ENCODE measurements at regions of chr11 and their contacts with region 1.

Region 1: GRCh38 chr11:6531267-6531752 is 34.2 kb downstream of the DNHD1 start:
- DNase-seq: peak; percentile 46 to 54 (median 50)
- H3K4me3 ChIP-seq: no peak overlapping the region
- H3K4me3 Mint-ChIP-seq: no peak overlapping the region
- H3K27ac ChIP-seq: no peak overlapping the region
- H3K27ac Mint-ChIP-seq: no peak overlapping the region
- H3K4me1 ChIP-seq: peaks cover 7% of the 10 kb centered on the region
- H3K4me1 Mint-ChIP-seq: peaks cover 6 to 14% (median 8%) of the 10 kb centered on the region in 4 donors
- H3K27me3 ChIP-seq: no peaks in the 10 kb centered on the region
- H3K27me3 Mint-ChIP-seq: no peaks in the 10 kb centered on the region

Region 2: GRCh38 chr11:6541356-6541755 is 10.0 kb after region 1 on chr11:
- CTCF ChIA-PET with region 1: interaction called, 20 read pairs
- POLR2A ChIA-PET with region 1: no interaction called
- intact Hi-C with region 1: no loop called
- DNase-seq: no peak
- H3K4me3 ChIP-seq: no peak overlapping the region
- H3K4me3 Mint-ChIP-seq: no peak overlapping the region
- H3K27ac ChIP-seq: no peak overlapping the region
- H3K27ac Mint-ChIP-seq: peak overlapping the region in 4 of 7 donors; percentile 6 to 60 (median 38)
- H3K4me1 ChIP-seq: peaks cover 13% of the 10 kb centered on the region
- H3K4me1 Mint-ChIP-seq: peaks cover 9 to 10% (median 9%) of the 10 kb centered on the region in 4 donors
- H3K27me3 ChIP-seq: no peaks in the 10 kb centered on the region
- H3K27me3 Mint-ChIP-seq: no peaks in the 10 kb centered on the region

Region 3: GRCh38 chr11:6637871-6638270 is 106.6 kb after region 1 on chr11:
- CTCF ChIA-PET with region 1: interaction called, 10 read pairs
- POLR2A ChIA-PET with region 1: no interaction called
- intact Hi-C with region 1: no loop called
- DNase-seq: no peak
- H3K4me3 ChIP-seq: no peak overlapping the region
- H3K4me3 Mint-ChIP-seq: no peak overlapping the region
- H3K27ac ChIP-seq: no peak overlapping the region
- H3K27ac Mint-ChIP-seq: no peak overlapping the region
- H3K4me1 ChIP-seq: no peaks in the 10 kb centered on the region
- H3K4me1 Mint-ChIP-seq: peaks cover 0 to 6% (median 0%) of the 10 kb centered on the region in 4 donors
- H3K27me3 ChIP-seq: no peaks in the 10 kb centered on the region
- H3K27me3 Mint-ChIP-seq: peaks cover 0 to 2% of the 10 kb centered on the region in 2 donors

Region 4: DNA sequence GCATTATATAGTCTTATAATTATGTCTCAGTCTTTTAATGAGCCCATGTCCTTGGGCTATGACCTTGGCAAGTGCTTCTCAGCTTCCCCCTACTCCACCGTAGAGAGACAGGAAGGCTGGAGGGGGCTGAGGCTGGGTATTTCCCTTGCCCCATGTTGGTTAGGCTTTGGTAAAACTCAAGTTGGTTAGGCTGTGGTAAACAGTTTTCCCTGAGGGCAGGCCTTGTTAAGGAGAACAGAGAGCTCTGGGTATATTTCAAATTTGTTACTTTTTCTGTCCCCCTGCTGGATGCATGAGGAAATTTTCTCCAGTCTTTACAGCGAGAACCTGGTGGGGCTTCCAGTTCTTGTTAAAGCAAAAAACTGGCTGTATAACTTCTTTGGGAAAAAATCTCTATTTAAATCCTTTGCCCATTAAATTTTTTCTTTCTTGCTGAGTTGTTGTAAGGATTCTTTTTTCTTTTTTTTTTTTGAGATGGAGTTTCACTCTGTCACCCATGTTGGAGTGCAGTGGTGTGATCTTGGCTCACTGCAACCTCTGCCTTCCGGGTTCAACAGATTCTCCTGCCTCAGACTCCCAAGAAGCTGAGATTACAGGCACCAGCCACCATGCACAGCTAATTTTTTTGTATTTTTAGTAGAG is 136.5 kb after region 1 on chr11:
- CTCF ChIA-PET with region 1: interaction called, 9 read pairs
- POLR2A ChIA-PET with region 1: interaction called, 4 read pairs
- intact Hi-C with region 1: loop called (anchors 1 kb)
- DNase-seq: peak; percentile 48 to 78 (median 54)
- H3K4me3 ChIP-seq: no peak overlapping the region
- H3K4me3 Mint-ChIP-seq: peak overlapping the region in 7 of 8 donors; percentile 5 to 35 (median 16)
- H3K27ac ChIP-seq: no peak overlapping the region
- H3K27ac Mint-ChIP-seq: peak overlapping the region; percentile 11 to 88 (median 74)
- H3K4me1 ChIP-seq: peaks cover 59% of the 10 kb centered on the region
- H3K4me1 Mint-ChIP-seq: peaks cover 45 to 87% (median 54%) of the 10 kb centered on the region in 4 donors
- H3K27me3 ChIP-seq: no peaks in the 10 kb centered on the region
- H3K27me3 Mint-ChIP-seq: no peaks in the 10 kb centered on the region

Region 5: DNA sequence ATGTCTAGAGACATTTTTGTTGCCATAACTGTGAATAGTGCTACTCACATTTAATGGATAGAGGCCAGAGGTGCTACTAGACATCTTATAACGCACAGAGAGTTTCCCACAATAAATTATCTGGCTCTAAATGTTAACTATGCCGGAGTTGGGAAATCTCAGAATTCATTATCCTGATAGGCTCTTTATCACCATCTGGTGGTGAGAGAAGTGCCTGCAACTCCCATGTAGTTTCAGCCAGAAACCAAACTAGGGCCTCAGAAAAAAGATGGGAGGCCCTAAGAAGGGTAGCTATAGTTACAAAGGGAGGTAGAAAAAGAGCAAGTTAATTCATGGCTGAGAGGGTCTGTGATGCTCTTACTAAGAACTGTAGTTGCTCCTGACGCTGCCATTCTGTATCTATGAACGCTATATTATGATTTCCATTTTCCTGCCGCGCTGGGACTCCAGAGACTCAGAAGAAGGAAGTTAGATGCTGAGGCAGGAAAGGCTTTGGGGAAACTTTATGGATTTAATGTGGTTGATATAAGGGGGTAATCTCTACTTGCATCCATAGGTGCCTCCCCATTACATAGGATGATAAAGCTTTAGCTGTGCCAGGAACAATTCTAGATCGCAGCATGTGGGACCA is 174.7 kb after region 1 on chr11:
- CTCF ChIA-PET with region 1: interaction called, 82 read pairs
- POLR2A ChIA-PET with region 1: no interaction called
- intact Hi-C with region 1: loop called (anchors 1 kb)
- DNase-seq: peak; percentile 38 to 52 (median 46)
- H3K4me3 ChIP-seq: no peak overlapping the region
- H3K4me3 Mint-ChIP-seq: no peak overlapping the region
- H3K27ac ChIP-seq: no peak overlapping the region
- H3K27ac Mint-ChIP-seq: peak overlapping the region; percentile 4 to 84 (median 43)
- H3K4me1 ChIP-seq: no peaks in the 10 kb centered on the region
- H3K4me1 Mint-ChIP-seq: peaks cover 9 to 25% (median 18%) of the 10 kb centered on the region in 4 donors
- H3K27me3 ChIP-seq: no peaks in the 10 kb centered on the region
- H3K27me3 Mint-ChIP-seq: no peaks in the 10 kb centered on the region

Region 6: GRCh38 chr11:6737872-6738466 is 206.7 kb after region 1 on chr11:
- CTCF ChIA-PET with region 1: interaction called, 15 read pairs
- POLR2A ChIA-PET with region 1: no interaction called
- intact Hi-C with region 1: no loop called
- DNase-seq: peak; percentile 73 to 82 (median 75)
- H3K4me3 ChIP-seq: no peak overlapping the region
- H3K4me3 Mint-ChIP-seq: peak overlapping the region; percentile 23 to 77 (median 38)
- H3K27ac ChIP-seq: peak overlapping the region; percentile 38
- H3K27ac Mint-ChIP-seq: peak overlapping the region; percentile 60 to 89 (median 75)
- H3K4me1 ChIP-seq: peaks cover 88% of the 10 kb centered on the region
- H3K4me1 Mint-ChIP-seq: peaks cover 75 to 91% (median 83%) of the 10 kb centered on the region in 4 donors
- H3K27me3 ChIP-seq: no peaks in the 10 kb centered on the region
- H3K27me3 Mint-ChIP-seq: no peaks in the 10 kb centered on the region

Measured in CD4-positive, alpha-beta memory T cell (primary cell).